ENCODE measurements at regions of chr3 and their contacts with region 1.

Region 1: GRCh38 chr3:8239718-8240695 is 261.6 kb upstream of the LMCD1 start:
- DNase-seq: peak; percentile 28
- CTCF ChIP-seq: peak; percentile 64

Region 2: DNA sequence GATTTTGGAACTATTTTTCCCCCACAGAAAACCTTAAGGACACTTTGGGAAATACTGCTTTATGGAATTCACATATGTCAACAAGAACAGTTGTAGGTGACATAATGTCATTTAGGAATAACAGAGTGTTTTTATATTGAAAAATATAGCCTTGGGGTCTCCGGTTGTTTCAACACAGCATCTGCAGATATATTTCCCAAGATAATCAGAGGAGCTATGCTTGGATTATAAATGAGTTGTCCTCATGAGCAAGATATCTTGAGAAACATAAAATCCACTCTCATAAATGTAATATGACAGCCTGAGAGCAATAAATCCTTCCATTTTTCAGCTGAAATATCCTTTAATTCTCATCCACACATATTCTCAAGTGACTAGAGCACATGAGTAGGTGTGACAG is 212.1 kb before region 1 on chr3:
- CTCF ChIA-PET with region 1: no interaction called
- POLR2A ChIA-PET with region 1: no interaction called
- DNase-seq: no peak
- CTCF ChIP-seq: no peak

Region 3: DNA sequence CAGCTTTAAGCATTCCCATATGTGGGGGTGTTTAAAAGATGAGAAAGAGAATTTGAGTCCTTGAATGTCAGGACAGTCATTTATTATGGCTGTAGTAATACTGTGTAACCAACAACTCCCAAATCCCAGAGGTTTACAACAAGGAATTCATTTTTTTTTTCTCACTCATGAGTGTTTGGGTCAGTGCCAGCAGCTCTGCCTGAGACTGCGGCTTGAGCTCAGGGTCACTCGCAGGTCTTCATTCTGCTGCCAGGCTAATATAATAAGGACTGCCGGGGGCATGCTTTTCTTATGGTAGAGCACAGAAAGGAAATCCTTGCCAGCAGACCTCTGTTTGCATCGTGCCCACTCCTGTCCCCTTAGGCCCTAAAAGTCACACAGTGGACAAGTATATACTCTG is 16.2 kb before region 1 on chr3:
- CTCF ChIA-PET with region 1: interaction called, 39 read pairs
- POLR2A ChIA-PET with region 1: no interaction called
- DNase-seq: no peak
- CTCF ChIP-seq: no peak

Region 4: DNA sequence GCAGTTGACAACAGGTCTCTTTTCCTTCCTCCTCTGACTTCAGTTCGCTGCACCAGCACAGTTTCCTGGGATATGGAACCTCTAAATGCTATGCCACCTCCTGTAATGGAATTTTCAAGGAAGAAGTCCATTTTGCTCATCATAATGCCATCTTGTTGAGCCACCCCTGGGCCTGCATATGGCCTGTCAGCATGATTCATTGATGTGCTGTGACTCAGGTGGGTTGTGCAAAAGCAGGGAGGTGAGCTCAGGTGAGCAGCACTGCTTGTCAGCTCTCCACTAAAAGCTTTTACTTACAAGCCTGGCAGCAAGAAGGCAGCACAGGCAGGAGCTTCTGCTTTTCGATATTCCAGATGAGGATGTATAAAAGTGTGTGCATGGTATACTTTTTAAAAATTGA is 14.5 kb after region 1 on chr3:
- CTCF ChIA-PET with region 1: interaction called, 43 read pairs
- POLR2A ChIA-PET with region 1: no interaction called
- DNase-seq: no peak
- CTCF ChIP-seq: no peak